ENCODE measurements at regions of chr3 and their contacts with region 1.

Region 1: GRCh38 chr3:168213920-168214319 is 118.2 kb upstream of the GOLIM4 start:
- DNase-seq: no peak
- H3K4me3 ChIP-seq: no peak overlapping the region; a peak in 1 of 4 replicates
- H3K27ac ChIP-seq: no peak overlapping the region
- H3K4me1 ChIP-seq: peaks cover 0 to 2% of the 10 kb centered on the region in 2 experiments; a peak in 1 of 4 replicates
- H3K27me3 ChIP-seq: no peaks in the 10 kb centered on the region
- CTCF ChIP-seq: no peak
- EP300 ChIP-seq: no peak
- RAD21 ChIP-seq: no peak

Region 2: DNA sequence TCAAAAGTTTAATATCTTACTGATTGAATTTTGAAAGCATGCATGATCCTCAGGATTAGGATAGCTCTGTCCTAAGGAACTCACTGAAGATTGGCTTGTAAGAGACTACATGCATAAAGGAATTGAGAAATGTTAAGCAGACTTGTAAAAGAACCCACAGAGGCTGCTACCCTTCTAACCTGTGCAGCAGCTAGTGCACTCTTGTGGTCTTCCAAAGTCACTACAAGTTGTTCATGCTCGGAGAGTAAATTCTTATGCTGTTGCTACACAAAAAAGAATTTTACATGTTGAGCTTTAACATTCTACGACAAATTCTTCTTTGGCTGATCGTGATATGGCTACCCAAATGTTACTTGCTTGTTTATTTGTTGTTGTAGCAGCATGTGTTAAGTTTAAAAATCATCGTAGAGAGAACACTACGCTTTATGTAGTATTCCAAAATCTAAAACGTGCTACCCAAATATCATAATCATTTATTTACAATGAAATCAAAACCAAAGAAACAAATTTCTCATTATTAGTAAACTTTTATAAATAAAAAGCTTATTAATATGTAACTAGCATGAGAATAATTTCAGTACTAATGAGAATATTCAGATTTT is 173.2 kb before region 1 on chr3:
- CTCF ChIA-PET with region 1: interaction called, 10 read pairs
- POLR2A ChIA-PET with region 1: no interaction called
- DNase-seq: peak; percentile 36
- H3K4me3 ChIP-seq: no peak overlapping the region
- H3K27ac ChIP-seq: no peak overlapping the region
- H3K4me1 ChIP-seq: peaks cover 0 to 9% of the 10 kb centered on the region in 2 experiments; a peak in 2 of 4 replicates
- H3K27me3 ChIP-seq: no peaks in the 10 kb centered on the region
- CTCF ChIP-seq: peak; percentile 75
- EP300 ChIP-seq: no peak
- RAD21 ChIP-seq: peak; percentile 79

Region 3: DNA sequence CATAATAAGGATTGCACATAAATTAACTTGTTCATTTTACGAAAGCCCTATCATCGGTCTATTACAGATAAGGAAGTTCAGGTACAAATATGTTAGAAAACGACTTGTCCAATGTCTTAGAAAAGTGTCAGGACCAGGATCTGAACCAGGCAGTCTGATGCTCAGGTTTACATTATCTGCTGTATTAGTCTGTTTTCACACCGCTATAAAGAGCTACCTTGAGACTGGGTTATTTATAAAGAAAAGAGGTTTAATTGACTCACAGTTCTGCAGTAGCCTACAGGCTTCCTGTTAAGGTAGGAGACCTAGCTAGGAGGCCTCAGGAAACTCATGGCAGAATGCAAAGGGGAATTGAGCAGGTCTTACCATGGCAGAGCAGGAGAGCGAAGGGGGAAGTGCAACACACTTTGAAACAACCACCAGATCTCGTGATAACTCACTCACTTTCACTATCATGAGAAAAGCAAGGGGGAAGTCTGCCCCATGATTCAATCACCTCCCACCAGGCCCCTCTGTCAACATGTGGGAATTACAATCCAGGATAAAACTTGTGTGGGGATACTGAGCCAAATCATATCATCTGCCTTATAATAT is 72.4 kb before region 1 on chr3:
- CTCF ChIA-PET with region 1: no interaction called
- POLR2A ChIA-PET with region 1: no interaction called
- DNase-seq: no peak
- H3K4me3 ChIP-seq: no peak overlapping the region
- H3K27ac ChIP-seq: no peak overlapping the region
- H3K4me1 ChIP-seq: no peaks in the 10 kb centered on the region
- H3K27me3 ChIP-seq: no peaks in the 10 kb centered on the region
- CTCF ChIP-seq: no peak
- EP300 ChIP-seq: no peak
- RAD21 ChIP-seq: no peak

Region 4: GRCh38 chr3:168249550-168250414 is 35.9 kb after region 1 on chr3:
- CTCF ChIA-PET with region 1: interaction called, 20 read pairs
- POLR2A ChIA-PET with region 1: interaction called, 4 read pairs
- DNase-seq: peak; percentile 89
- H3K4me3 ChIP-seq: peak overlapping the region; percentile 55 to 68
- H3K27ac ChIP-seq: peak overlapping the region in 1 of 2 experiments; percentile 79; a peak in 2 of 4 replicates
- H3K4me1 ChIP-seq: peaks cover 0 to 2% of the 10 kb centered on the region in 2 experiments; a peak in 1 of 4 replicates
- H3K27me3 ChIP-seq: peaks cover 28% of the 10 kb centered on the region
- CTCF ChIP-seq: peak; percentile 44
- EP300 ChIP-seq: no peak
- RAD21 ChIP-seq: peak; percentile 47

Region 5: DNA sequence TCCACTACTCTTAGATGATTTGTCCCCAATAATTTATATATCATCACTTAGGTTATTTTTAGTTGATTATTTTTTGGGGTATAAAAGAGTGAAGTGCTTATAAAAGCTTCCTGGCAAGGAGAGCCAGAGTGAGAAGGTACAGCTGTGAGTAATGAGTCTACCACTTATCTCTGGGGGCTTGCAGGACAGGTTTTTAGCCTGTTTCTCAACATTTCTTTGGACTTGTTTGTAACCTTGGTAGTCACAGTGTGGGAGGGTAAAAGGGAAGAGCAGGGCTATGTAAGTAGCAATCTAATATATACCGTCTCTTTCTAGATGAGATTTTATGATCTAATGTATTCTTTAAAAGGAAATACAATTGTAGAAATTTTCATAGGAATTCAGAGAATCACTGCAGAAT is 203.1 kb after region 1 on chr3:
- CTCF ChIA-PET with region 1: no interaction called
- POLR2A ChIA-PET with region 1: no interaction called
- DNase-seq: no peak
- H3K4me3 ChIP-seq: no peak overlapping the region
- H3K27ac ChIP-seq: no peak overlapping the region
- H3K4me1 ChIP-seq: no peaks in the 10 kb centered on the region
- H3K27me3 ChIP-seq: no peaks in the 10 kb centered on the region
- CTCF ChIP-seq: no peak
- EP300 ChIP-seq: no peak
- RAD21 ChIP-seq: no peak

Region 6: DNA sequence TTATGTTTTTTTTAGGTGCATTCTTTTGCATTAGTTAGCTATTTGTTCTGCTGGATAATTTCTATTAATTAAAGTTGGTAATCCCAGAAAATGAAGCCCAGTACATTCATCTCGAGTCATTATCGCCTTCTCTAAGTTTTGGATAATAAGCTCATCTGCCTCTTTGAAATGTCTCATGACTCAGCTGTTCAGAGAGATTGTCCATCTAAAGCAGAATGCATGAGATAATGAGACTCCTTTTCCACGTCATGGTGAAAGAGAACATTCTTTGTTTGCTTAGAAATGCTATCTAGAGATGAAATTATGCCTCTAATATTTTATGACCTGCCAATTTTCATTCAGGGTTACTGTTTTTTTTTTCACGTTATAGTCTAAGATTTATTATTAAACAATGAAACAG is 256.5 kb after region 1 on chr3:
- CTCF ChIA-PET with region 1: interaction called, 16 read pairs
- POLR2A ChIA-PET with region 1: interaction called, 3 read pairs
- DNase-seq: no peak
- H3K4me3 ChIP-seq: no peak overlapping the region
- H3K27ac ChIP-seq: no peak overlapping the region
- H3K4me1 ChIP-seq: no peaks in the 10 kb centered on the region
- H3K27me3 ChIP-seq: no peaks in the 10 kb centered on the region
- CTCF ChIP-seq: no peak
- EP300 ChIP-seq: no peak
- RAD21 ChIP-seq: no peak

Region 7: DNA sequence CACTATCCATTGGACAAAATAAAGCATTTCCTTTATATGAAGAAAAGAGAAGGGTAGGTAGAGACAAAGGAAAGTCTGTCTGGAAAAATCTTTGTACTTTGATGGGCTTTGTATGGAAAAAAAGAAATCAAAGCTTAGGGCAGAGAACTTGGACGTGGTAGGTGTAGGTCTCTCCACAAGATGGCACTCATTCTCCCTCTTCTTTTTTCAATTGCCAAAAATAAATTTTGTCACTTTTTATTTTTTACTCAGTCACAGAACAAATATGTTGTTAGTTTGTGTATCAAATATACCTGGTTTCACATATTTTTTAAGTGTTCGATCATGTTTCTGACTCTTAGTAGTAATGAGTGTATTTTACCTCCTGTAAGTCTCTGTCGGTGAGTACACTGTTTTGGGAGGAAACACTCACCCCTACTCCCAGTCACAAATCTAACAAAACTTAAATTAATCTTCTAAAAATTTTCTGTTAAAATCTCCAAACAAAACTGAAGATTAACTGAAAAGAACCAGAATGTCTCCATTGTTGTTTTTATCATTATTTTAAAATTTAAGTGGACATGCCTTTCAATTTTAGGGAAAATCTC is 297.6 kb after region 1 on chr3:
- CTCF ChIA-PET with region 1: interaction called, 13 read pairs
- POLR2A ChIA-PET with region 1: no interaction called
- DNase-seq: peak; percentile 12
- H3K4me3 ChIP-seq: no peak overlapping the region
- H3K27ac ChIP-seq: no peak overlapping the region
- H3K4me1 ChIP-seq: no peaks in the 10 kb centered on the region
- H3K27me3 ChIP-seq: no peaks in the 10 kb centered on the region
- CTCF ChIP-seq: peak; percentile 62
- EP300 ChIP-seq: no peak
- RAD21 ChIP-seq: peak; percentile 76

Region 8: DNA sequence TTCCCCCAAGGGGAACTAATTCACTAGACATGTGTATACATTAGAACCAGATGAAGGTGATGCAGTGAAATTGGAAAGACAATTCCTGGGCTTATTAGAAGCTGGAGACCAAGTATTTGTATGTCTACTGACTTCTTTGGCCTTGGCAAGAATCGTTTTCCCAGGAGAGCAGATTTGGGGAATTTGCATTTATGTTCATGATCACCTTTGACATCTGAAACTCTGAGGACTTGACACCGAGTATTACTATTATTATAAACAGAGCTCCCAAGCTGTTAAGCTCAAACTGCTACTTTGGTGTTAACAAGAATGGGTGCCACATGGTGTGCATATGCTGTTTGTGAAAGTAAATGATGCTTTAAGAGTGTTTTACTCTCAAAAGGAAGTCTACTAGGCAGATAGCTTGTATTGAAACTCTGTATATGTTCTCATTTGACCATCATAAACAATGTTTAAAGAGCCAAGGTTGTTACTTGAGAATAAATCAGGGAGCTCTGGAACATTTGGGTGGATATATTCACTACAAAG is 401.6 kb after region 1 on chr3:
- CTCF ChIA-PET with region 1: interaction called, 18 read pairs
- POLR2A ChIA-PET with region 1: no interaction called
- DNase-seq: no peak
- H3K4me3 ChIP-seq: no peak overlapping the region
- H3K27ac ChIP-seq: no peak overlapping the region
- H3K4me1 ChIP-seq: no peaks in the 10 kb centered on the region
- H3K27me3 ChIP-seq: no peaks in the 10 kb centered on the region
- CTCF ChIP-seq: no peak
- EP300 ChIP-seq: no peak
- RAD21 ChIP-seq: no peak

Region 9: GRCh38 chr3:168620826-168621225 is 406.9 kb after region 1 on chr3:
- CTCF ChIA-PET with region 1: interaction called, 18 read pairs
- POLR2A ChIA-PET with region 1: no interaction called
- DNase-seq: peak; percentile 36
- H3K4me3 ChIP-seq: peak overlapping the region in 1 of 2 experiments; percentile 54; a peak in 1 of 4 replicates
- H3K27ac ChIP-seq: no peak overlapping the region
- H3K4me1 ChIP-seq: no peaks in the 10 kb centered on the region; a peak in 1 of 4 replicates
- H3K27me3 ChIP-seq: no peaks in the 10 kb centered on the region
- CTCF ChIP-seq: peak; percentile 50
- EP300 ChIP-seq: no peak
- RAD21 ChIP-seq: peak; percentile 85

Measured in SK-N-SH (cell line).